Activated CD4-positive, alpha-beta memory T cell treated with anti-CD3 and anti-CD28 coated beads, Interleukin-2, amount 10 ng/mL, durations not matched to agents 7 days and 5 days (primary cell): ENCODE measurements at regions of chr14 and their contacts with region 1.

Region 1: DNA sequence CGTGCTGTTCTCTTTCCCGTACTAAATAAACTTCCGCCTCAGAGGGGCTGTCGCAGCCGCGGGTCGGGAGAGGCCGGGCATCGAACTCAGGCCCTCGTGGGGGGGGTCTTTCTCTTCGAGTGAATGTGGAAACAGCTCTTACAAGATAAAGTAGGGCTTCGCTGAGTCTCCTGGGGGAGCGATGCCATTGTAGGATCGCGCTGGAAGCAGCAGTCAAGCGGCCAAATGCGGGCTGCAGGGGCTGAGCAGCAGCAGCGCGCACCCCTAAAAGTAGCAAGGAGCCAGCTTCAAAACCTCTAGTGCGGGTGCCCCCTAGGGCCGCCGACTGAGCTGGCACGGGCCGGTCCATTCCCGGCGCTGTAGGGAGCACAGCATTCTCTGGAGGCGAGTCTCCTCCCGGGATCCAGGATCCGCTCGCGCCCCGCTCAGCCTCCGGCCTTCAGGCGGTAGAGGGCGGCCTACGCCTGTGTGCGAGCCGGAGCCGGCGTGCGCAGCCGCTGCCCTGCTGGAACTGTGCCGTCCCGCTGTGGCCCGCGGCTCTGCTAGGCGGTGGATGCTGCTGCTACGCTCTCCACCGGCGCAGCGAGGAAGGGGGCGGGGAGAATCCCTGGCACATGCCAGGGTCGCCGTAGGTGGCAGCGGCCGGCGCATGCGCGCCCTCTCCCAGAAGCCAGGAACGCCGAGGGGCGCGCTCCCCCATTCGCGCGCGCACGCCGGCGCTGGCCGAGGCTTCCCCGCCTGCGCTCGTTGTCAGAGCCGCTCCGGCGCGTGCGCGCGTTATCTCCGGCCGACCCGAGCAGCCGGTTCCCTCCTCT is at the start of gene FUT8:
- DNase-seq: peak; percentile 93
- H3K4me3 Mint-ChIP-seq: peak within 1 kb of the TSS; percentile 91
- H3K27ac Mint-ChIP-seq: peak within 1 kb of the TSS; percentile 93
- H3K4me1 Mint-ChIP-seq: peaks cover 38% of the 10 kb centered on the region
- H3K27me3 Mint-ChIP-seq: no peaks in the 10 kb centered on the region
- total RNA-seq, gene FUT8: 85.0 to 85.5 TPM

Region 2: GRCh38 chr14:65164068-65164824 is 248.0 kb before region 1 on chr14:
- CTCF ChIA-PET with region 1: interaction called, 52 read pairs
- POLR2A ChIA-PET with region 1: interaction called, 26 read pairs
- DNase-seq: peak; percentile 49
- H3K4me3 Mint-ChIP-seq: no peak overlapping the region
- H3K27ac Mint-ChIP-seq: no peak overlapping the region
- H3K4me1 Mint-ChIP-seq: peaks cover 22% of the 10 kb centered on the region
- H3K27me3 Mint-ChIP-seq: no peaks in the 10 kb centered on the region

Region 3: DNA sequence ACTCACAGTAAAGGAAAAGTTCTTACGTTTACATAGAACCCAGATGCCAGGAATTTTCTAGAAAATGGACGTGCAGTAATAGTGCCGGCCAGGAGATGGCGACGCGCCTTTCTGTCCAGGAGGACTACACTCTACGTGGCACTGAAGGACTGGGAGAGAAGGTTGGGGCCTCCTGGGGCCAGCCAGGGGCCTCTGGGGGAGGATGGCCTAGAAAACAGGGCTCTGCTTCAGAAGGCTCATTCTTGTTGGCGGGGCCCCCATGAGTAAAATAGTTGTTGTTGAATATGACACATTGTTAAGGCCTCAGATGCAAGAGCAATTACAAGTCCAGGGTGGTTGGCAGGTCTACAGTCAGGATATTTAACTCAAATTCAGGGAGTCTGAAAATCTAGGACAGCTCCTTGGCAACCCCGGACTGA is 189.8 kb before region 1 on chr14:
- CTCF ChIA-PET with region 1: interaction called, 27 read pairs
- POLR2A ChIA-PET with region 1: interaction called, 46 read pairs
- DNase-seq: peak; percentile 67
- H3K4me3 Mint-ChIP-seq: no peak overlapping the region
- H3K27ac Mint-ChIP-seq: peak overlapping the region; percentile 40
- H3K4me1 Mint-ChIP-seq: peaks cover 49% of the 10 kb centered on the region
- H3K27me3 Mint-ChIP-seq: no peaks in the 10 kb centered on the region

Region 4: GRCh38 chr14:65476273-65476941 is 64.2 kb after region 1 on chr14:
- CTCF ChIA-PET with region 1: interaction called, 11 read pairs
- POLR2A ChIA-PET with region 1: no interaction called
- DNase-seq: no peak
- H3K4me3 Mint-ChIP-seq: no peak overlapping the region
- H3K27ac Mint-ChIP-seq: no peak overlapping the region
- H3K4me1 Mint-ChIP-seq: peaks cover 50% of the 10 kb centered on the region
- H3K27me3 Mint-ChIP-seq: no peaks in the 10 kb centered on the region

Region 5: GRCh38 chr14:65879248-65880009 is 467.2 kb after region 1 on chr14:
- CTCF ChIA-PET with region 1: no interaction called
- POLR2A ChIA-PET with region 1: interaction called, 12 read pairs
- DNase-seq: peak; percentile 26
- H3K4me3 Mint-ChIP-seq: no peak overlapping the region
- H3K27ac Mint-ChIP-seq: peak overlapping the region; percentile 88
- H3K4me1 Mint-ChIP-seq: peaks cover 5% of the 10 kb centered on the region
- H3K27me3 Mint-ChIP-seq: no peaks in the 10 kb centered on the region

Region 6: GRCh38 chr14:66070509-66071319 is 658.5 kb after region 1 on chr14:
- CTCF ChIA-PET with region 1: interaction called, 50 read pairs
- POLR2A ChIA-PET with region 1: interaction called, 10 read pairs
- DNase-seq: peak; percentile 71
- H3K4me3 Mint-ChIP-seq: no peak overlapping the region
- H3K27ac Mint-ChIP-seq: no peak overlapping the region
- H3K4me1 Mint-ChIP-seq: peaks cover 11% of the 10 kb centered on the region
- H3K27me3 Mint-ChIP-seq: peaks cover 12% of the 10 kb centered on the region